ENCODE measurements at regions of chr17 and their contacts with region 1.

Region 1: DNA sequence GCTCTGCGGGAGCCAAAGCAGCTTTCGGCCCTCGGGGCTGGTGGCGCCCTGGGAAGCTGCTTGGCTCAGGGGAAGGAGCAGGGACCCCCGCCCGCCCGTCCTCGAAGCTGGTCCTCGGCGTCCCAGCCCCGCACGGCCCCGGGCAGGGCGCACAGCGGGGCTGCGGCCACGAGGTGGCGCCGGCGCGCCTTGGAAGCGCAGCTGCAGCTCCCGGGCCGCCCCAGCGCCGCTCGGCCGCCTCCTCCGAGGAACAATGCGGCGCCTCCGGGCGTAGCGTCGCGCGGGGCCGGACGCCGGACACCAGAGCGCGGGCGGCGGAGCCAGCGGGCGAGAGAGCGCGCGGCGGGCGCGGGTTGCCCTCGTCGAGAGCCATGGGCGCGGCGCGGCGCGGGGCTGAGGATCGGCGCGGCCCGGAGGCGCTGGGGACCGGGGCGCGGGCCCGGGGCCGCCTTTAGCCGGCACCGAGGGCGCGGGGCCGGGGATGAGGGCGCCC is at the start of gene MGAT5B:
- DNase-seq: peak; percentile 100
- H3K4me3 ChIP-seq: peak within 1 kb of the TSS; percentile 56 to 74
- H3K27ac ChIP-seq: peak within 1 kb of the TSS in 1 of 2 experiments; percentile 60; a peak in 2 of 4 replicates
- H3K4me1 ChIP-seq: peaks cover 17 to 36% of the 10 kb centered on the region in 2 experiments; a peak in 3 of 4 replicates
- H3K27me3 ChIP-seq: no peaks in the 10 kb centered on the region
- CTCF ChIP-seq: peak; percentile 80
- EP300 ChIP-seq: no peak; a peak in 1 of 4 replicates
- RAD21 ChIP-seq: peak; percentile 93
- polyA plus RNA-seq, gene MGAT5B: 10.3 and 13.8 TPM in 2 replicates

Region 2: GRCh38 chr17:76582660-76583059 is 285.6 kb before region 1 on chr17:
- CTCF ChIA-PET with region 1: no interaction called
- POLR2A ChIA-PET with region 1: no interaction called
- DNase-seq: no peak
- H3K4me3 ChIP-seq: no peak overlapping the region
- H3K27ac ChIP-seq: no peak overlapping the region
- H3K4me1 ChIP-seq: peaks cover 0 to 9% of the 10 kb centered on the region in 2 experiments; a peak in 1 of 4 replicates
- H3K27me3 ChIP-seq: peaks cover 36% of the 10 kb centered on the region
- CTCF ChIP-seq: no peak
- EP300 ChIP-seq: no peak
- RAD21 ChIP-seq: no peak

Region 3: DNA sequence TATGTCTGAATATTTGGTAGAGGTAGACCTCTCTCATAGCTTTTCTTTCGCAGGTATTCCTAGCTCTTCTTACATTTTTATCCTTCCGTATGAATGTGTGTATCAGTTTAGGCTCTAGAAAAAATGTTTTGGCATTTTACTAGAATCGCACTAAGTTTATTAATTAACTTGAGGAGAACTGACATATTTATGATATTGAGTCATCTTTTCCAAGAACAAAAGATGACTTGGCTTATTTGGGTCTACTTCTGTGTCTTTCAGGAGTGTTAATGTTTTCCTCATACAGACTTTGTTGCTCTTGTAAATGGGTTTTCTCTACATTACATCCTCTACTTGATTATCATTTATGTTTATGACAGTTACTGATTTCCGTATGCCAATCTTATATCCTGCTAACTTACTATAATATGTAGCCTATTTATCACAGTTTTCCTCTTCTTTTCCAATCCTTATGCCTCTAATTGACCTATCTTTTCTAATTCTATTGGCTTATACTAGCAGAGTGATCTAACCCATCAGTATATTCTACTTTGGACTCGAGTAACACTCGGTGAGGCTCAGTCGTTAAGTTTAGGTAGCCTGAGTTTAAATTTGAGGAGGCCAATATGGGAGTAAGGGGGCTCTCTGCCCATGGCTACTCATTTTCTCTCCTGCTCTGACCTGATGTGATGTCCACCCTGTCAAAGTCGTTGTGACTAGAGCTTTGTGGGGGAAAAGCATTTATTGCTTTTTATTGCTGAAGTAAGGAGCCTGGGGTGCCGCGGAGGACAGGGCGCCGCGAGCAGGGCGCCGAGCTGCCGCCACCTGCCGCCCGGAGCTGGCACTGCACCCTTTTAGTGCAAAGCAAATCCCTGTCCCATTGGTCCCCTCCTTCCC is 244.7 kb before region 1 on chr17:
- CTCF ChIA-PET with region 1: no interaction called
- POLR2A ChIA-PET with region 1: no interaction called
- DNase-seq: peak; percentile 94
- H3K4me3 ChIP-seq: peak overlapping the region in 1 of 2 experiments; percentile 15; a peak in 2 of 4 replicates
- H3K27ac ChIP-seq: peak overlapping the region; percentile 47 to 53; a peak in 3 of 4 replicates
- H3K4me1 ChIP-seq: 0 out of 4 replicates have a peak, but pooled peaks cover 0 to 8% of the 10 kb centered on the region in 2 experiments
- H3K27me3 ChIP-seq: peaks cover 19% of the 10 kb centered on the region; the same call in 1 of the 2 replicates
- CTCF ChIP-seq: peak; percentile 99
- EP300 ChIP-seq: peak in 1 of 2 experiments; percentile 3; a peak in 1 of 4 replicates
- RAD21 ChIP-seq: peak; percentile 91

Region 4: DNA sequence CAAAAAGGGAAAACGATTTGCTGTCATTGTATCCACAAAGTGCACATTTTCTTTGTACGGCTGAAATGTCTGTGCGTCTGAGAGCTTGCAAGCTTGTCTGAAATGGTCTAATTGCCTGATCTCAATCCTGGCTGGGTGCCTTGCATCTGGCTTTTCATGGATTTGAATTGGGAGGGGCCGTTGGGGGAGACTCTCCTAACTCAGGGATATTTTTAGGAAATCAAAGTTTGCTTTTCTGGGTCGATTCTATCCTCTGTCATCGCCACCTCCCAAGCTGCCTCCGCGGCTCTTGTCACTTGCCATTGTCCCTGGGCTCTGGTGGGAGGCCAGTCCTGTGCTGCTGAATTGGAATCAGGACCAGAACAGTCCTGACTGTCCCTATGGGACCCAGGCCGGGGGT is 33.4 kb before region 1 on chr17:
- CTCF ChIA-PET with region 1: interaction called, 22 read pairs
- POLR2A ChIA-PET with region 1: no interaction called
- DNase-seq: peak; percentile 56
- H3K4me3 ChIP-seq: no peak overlapping the region
- H3K27ac ChIP-seq: peak overlapping the region in 1 of 2 experiments; percentile 65; a peak in 2 of 4 replicates
- H3K4me1 ChIP-seq: peaks cover 0 to 21% of the 10 kb centered on the region in 2 experiments; a peak in 1 of 4 replicates
- H3K27me3 ChIP-seq: peaks cover 7% of the 10 kb centered on the region
- CTCF ChIP-seq: no peak
- EP300 ChIP-seq: no peak; a peak in 1 of 4 replicates
- RAD21 ChIP-seq: no peak; the same call in 1 of the 2 replicates

Region 5: GRCh38 chr17:76887802-76888201 is 19.6 kb after region 1 on chr17:
- CTCF ChIA-PET with region 1: interaction called, 20 read pairs
- POLR2A ChIA-PET with region 1: interaction called, 3 read pairs
- DNase-seq: no peak
- H3K4me3 ChIP-seq: no peak overlapping the region
- H3K27ac ChIP-seq: no peak overlapping the region
- H3K4me1 ChIP-seq: no peaks in the 10 kb centered on the region; a peak in 1 of 4 replicates
- H3K27me3 ChIP-seq: no peaks in the 10 kb centered on the region
- CTCF ChIP-seq: 0 out of 2 replicates have a peak, but pooled peaks have one; percentile 26
- EP300 ChIP-seq: no peak
- RAD21 ChIP-seq: no peak

Region 6: DNA sequence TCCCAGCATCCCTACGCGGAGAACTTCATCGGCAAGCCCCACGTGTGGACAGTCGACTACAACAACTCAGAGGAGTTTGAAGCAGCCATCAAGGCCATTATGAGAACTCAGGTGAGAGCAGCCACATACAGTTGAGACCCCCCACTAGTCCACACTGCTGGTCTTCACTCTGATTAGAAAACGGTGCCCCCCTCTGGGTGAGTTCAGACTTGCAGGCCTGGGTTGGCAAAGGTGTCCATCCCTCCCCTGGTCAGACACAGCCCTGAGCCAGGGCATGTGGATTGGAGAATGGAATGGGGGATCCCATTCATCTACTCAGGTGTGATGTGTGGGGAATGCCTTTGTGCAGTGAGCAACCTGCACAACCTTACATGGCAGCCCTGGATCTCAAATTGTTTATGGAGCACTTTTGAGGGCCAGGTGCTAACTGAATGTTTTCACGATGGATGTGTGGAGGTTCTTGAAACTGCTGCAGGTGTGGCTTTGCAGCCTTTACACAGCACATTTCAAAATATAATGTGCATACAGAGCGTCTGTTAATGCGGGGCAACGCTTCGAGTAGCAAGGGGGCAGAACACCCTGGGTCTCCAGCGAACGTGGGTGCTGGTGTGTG is 72.6 kb after region 1 on chr17:
- CTCF ChIA-PET with region 1: interaction called, 20 read pairs
- POLR2A ChIA-PET with region 1: no interaction called
- DNase-seq: peak; percentile 72
- H3K4me3 ChIP-seq: no peak overlapping the region
- H3K27ac ChIP-seq: no peak overlapping the region
- H3K4me1 ChIP-seq: no peaks in the 10 kb centered on the region
- H3K27me3 ChIP-seq: no peaks in the 10 kb centered on the region
- CTCF ChIP-seq: peak; percentile 55
- EP300 ChIP-seq: no peak
- RAD21 ChIP-seq: peak; percentile 52

Region 7: GRCh38 chr17:77019955-77020379 is 151.7 kb after region 1 on chr17:
- CTCF ChIA-PET with region 1: interaction called, 11 read pairs
- POLR2A ChIA-PET with region 1: no interaction called
- DNase-seq: no peak
- H3K4me3 ChIP-seq: no peak overlapping the region
- H3K27ac ChIP-seq: no peak overlapping the region
- H3K4me1 ChIP-seq: no peaks in the 10 kb centered on the region
- H3K27me3 ChIP-seq: peaks cover 14% of the 10 kb centered on the region
- CTCF ChIP-seq: no peak
- EP300 ChIP-seq: no peak
- RAD21 ChIP-seq: no peak

Region 8: GRCh38 chr17:77054936-77055335 is 186.7 kb after region 1 on chr17:
- CTCF ChIA-PET with region 1: interaction called, 594 read pairs
- POLR2A ChIA-PET with region 1: interaction called, 8 read pairs
- DNase-seq: peak; percentile 87
- H3K4me3 ChIP-seq: no peak overlapping the region
- H3K27ac ChIP-seq: no peak overlapping the region
- H3K4me1 ChIP-seq: peaks cover 0 to 18% of the 10 kb centered on the region in 2 experiments; a peak in 1 of 4 replicates
- H3K27me3 ChIP-seq: peaks cover 49% of the 10 kb centered on the region
- CTCF ChIP-seq: no peak
- EP300 ChIP-seq: 0 out of 4 replicates have a peak, but pooled peaks of 1 of the 2 experiments have one; percentile 45
- RAD21 ChIP-seq: 0 out of 2 replicates have a peak, but pooled peaks have one; percentile 8